ENCODE measurements at regions of chr6 and their contacts with region 1.

Region 1: GRCh38 chr6:131909408-131910218 is 41.6 kb downstream of the CCN2 start:
- DNase-seq: peak; percentile 87
- H3K4me3 Mint-ChIP-seq: no peak overlapping the region
- H3K27ac Mint-ChIP-seq: no peak overlapping the region
- H3K4me1 Mint-ChIP-seq: peaks cover 5% of the 10 kb centered on the region
- H3K27me3 Mint-ChIP-seq: peaks cover 11% of the 10 kb centered on the region

Region 2: GRCh38 chr6:131129689-131130545 is 779.7 kb before region 1 on chr6:
- CTCF ChIA-PET with region 1: no interaction called
- intact Hi-C with region 1: no loop called
- DNase-seq: no peak
- H3K4me3 Mint-ChIP-seq: no peak overlapping the region
- H3K27ac Mint-ChIP-seq: no peak overlapping the region
- H3K4me1 Mint-ChIP-seq: no peaks in the 10 kb centered on the region
- H3K27me3 Mint-ChIP-seq: no peaks in the 10 kb centered on the region

Region 3: DNA sequence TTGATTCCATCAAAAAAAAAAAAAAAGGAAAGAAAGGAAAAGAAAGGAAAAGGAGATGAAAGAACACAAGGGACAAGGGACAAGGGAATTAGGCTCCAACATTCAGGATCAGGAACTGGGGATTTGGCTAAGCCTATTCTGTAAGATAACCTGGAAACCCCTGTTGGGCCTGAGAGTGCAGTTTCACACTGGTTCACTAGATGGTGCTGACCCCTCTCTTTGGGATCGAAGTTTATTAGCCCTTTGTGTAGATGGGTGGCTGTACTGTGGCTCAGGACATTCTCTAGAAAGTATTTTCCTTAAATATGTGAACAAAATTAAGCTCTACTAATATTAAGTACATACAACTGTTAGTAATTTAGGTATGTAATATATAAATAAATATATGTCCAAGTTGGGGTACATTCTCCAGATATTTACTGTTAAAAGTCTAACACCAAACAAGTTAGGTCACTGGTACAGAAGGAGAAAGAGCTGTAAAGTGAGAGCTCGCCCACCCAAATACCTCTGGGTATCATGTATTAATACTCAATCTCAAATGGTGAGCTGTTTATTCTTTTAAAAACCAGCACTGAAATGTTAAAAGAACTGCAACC is 214.7 kb before region 1 on chr6:
- CTCF ChIA-PET with region 1: interaction called, 19 read pairs
- intact Hi-C with region 1: loop called (anchors 2 kb)
- DNase-seq: peak; percentile 44
- H3K4me3 Mint-ChIP-seq: no peak overlapping the region
- H3K27ac Mint-ChIP-seq: no peak overlapping the region
- H3K4me1 Mint-ChIP-seq: no peaks in the 10 kb centered on the region
- H3K27me3 Mint-ChIP-seq: no peaks in the 10 kb centered on the region

Region 4: DNA sequence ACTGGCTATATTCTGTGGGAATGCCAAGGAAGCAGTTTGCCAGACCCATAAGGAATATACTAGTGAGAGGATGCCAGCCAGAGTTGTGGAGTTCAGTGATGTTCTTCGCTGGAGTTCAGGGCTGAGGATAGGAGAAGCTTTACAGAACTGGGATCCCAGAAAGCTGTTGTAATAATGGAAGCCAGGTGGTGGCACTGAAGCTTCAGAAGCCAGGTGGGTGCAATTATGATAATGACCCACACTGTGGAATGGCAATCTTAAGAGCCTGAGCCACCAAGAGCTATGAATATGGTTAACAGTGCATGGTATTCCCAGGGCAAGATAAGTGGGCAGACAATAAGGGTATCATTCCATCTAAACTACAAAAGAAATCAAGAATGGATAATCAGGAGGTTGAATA is 126.8 kb before region 1 on chr6:
- CTCF ChIA-PET with region 1: interaction called, 5 read pairs
- intact Hi-C with region 1: loop called (anchors 1 kb)
- DNase-seq: no peak
- H3K4me3 Mint-ChIP-seq: no peak overlapping the region
- H3K27ac Mint-ChIP-seq: no peak overlapping the region
- H3K4me1 Mint-ChIP-seq: no peaks in the 10 kb centered on the region
- H3K27me3 Mint-ChIP-seq: peaks cover 7% of the 10 kb centered on the region

Region 5: DNA sequence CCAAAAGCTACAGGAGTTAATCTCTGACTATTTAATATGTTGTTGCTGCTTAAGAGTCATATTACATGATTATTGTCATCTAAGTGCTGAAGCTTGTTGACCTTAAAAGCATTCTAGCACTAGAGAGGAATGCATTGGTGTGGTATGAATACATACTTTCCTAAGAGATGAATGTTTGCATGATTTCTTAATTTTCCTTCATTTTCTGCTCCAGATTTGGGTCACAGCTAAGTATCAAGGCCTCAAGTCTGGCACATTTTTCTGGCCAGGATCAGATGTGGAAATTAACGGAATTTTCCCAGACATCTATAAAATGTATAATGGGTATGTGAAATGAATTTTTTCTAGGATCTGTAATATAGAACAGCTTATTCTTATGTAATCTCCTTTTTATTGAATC is 48.2 kb before region 1 on chr6:
- CTCF ChIA-PET with region 1: no interaction called
- intact Hi-C with region 1: no loop called
- DNase-seq: no peak
- H3K4me3 Mint-ChIP-seq: no peak overlapping the region
- H3K27ac Mint-ChIP-seq: no peak overlapping the region
- H3K4me1 Mint-ChIP-seq: no peaks in the 10 kb centered on the region
- H3K27me3 Mint-ChIP-seq: peaks cover 10% of the 10 kb centered on the region

Region 6: DNA sequence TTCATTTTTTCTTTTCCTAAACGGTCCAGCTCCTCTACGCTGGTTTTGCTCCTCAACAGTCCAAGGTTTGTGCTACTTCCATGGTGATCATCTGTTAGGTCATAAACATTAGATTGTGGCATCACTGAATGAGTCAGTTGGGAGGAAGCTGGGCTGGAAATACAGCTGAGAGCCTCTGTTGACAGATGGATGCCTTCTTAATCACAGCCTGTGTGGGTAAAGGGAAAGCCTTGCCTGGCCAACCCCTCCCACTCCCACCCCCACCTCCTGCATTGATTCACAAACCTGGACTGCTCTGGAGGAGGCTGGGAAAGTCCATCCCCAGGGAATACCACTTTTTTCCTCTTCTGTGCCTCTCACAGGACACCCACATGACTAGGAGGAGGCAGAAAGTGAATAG is 222.1 kb after region 1 on chr6:
- CTCF ChIA-PET with region 1: no interaction called
- intact Hi-C with region 1: no loop called
- DNase-seq: no peak
- H3K4me3 Mint-ChIP-seq: no peak overlapping the region
- H3K27ac Mint-ChIP-seq: no peak overlapping the region
- H3K4me1 Mint-ChIP-seq: no peaks in the 10 kb centered on the region
- H3K27me3 Mint-ChIP-seq: peaks cover 17% of the 10 kb centered on the region